ENCODE measurements at regions of chr1 and their contacts with region 1.

Region 1: DNA sequence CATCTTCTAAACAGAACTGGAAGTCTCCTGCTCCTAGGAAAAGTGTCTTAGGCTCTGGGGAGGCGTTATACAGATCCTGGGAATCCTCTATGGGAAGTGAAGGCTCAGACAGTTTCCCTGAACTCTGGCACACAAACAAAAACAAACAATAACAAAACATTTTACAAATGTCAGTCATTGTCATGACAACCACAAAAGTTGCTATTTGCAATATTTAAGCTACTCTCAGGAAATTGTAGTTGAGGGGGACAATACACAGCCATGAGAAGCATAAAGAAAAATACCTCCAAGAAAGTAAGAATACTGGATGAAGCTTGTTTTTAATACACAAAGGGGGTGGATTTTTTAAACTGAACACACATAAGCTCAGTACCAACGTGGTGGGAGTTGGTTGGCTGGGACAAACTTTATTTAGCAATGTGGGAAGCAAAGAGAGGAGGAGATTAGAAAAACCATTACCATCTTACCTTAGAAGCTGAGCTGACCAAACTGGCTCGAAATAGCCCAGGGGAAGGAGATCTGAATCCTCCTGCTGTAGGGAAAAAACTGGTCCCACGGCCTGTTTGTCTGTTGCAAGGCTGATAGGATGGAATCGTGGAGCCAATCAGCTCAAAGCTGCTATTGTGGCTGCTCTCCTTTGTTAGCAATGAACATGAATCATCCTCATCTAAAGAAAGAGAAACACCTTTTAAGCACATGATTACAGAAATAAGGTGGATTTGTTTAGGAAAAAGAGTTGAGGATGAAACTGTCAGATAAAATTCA is 21.7 kb downstream of the CLSPN start:
- DNase-seq: no peak
- H3K4me3 ChIP-seq: no peak overlapping the region
- H3K27ac ChIP-seq: no peak overlapping the region
- H3K4me1 ChIP-seq: no peaks in the 10 kb centered on the region
- CTCF ChIP-seq: no peak

Region 2: GRCh38 chr1:35568975-35569395 is 179.1 kb before region 1 on chr1:
- CTCF ChIA-PET with region 1: no interaction called
- POLR2A ChIA-PET with region 1: no interaction called
- intact Hi-C with region 1: no loop called
- DNase-seq: peak; percentile 75
- H3K4me3 ChIP-seq: no peak overlapping the region
- H3K27ac ChIP-seq: no peak overlapping the region
- H3K4me1 ChIP-seq: no peaks in the 10 kb centered on the region
- CTCF ChIP-seq: peak; percentile 96

Region 3: GRCh38 chr1:35763201-35763600 is 15.1 kb after region 1 on chr1:
- CTCF ChIA-PET with region 1: no interaction called
- POLR2A ChIA-PET with region 1: interaction called, 3 read pairs
- intact Hi-C with region 1: loop called (anchors 2 kb)
- DNase-seq: no peak
- H3K4me3 ChIP-seq: no peak overlapping the region
- H3K27ac ChIP-seq: no peak overlapping the region
- H3K4me1 ChIP-seq: peaks cover 26% of the 10 kb centered on the region
- CTCF ChIP-seq: no peak

Measured in OCI-LY7 (cell line).